ENCODE measurements at regions of chr16 and their contacts with region 1.

Region 1: DNA sequence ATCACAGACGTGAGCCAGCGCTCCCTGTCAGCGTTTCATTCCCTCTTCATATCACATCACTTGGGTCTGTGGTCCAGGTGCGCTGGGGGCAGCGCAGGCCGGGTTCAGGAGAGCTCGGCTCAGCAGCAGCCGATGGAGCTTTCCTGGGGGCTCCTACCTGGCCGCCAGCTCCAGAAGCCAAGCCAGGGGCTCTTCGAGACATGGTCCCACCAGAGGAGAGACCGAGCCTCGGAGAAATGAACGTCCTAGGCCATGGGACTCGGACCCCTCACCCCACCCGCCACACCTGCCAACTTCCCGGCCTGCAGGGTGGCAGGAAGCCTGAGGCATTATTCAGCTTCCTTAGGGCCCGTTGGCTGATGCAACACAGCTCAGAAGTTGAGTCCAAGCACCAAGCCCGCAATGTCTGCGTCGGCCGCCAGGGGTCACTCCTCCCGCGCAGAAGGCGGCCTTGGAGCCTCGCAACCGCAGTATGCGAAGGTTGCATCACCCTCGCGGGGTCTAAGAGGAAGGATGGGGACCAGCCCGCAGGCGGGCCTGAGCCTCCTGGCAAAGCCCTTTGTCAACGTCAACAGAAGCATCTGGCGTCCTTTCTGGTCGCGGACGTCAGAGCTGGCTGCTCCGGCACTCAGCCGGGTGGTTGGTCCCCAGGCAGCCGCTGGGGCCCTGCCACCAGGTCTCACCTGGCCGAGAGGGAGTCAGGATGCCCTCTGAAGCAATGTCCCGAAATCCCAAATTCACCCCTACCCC is 13.2 kb upstream of the KLHDC4 start:
- DNase-seq: peak; percentile 97
- ATAC-seq: peak; percentile 80
- H3K4me3 Mint-ChIP-seq: peak overlapping the region; percentile 66
- H3K27ac Mint-ChIP-seq: peak overlapping the region; percentile 97
- H3K4me1 Mint-ChIP-seq: peaks cover 65% of the 10 kb centered on the region
- H3K27me3 Mint-ChIP-seq: no peaks in the 10 kb centered on the region

Region 2: GRCh38 chr16:87636072-87636684 is 142.8 kb before region 1 on chr16:
- CTCF ChIA-PET with region 1: no interaction called
- POLR2A ChIA-PET with region 1: no interaction called
- DNase-seq: peak; percentile 85
- ATAC-seq: peak; percentile 93
- H3K4me3 Mint-ChIP-seq: peak overlapping the region; percentile 59
- H3K27ac Mint-ChIP-seq: no peak overlapping the region
- H3K4me1 Mint-ChIP-seq: peaks cover 18% of the 10 kb centered on the region
- H3K27me3 Mint-ChIP-seq: peaks cover 6% of the 10 kb centered on the region

Region 3: DNA sequence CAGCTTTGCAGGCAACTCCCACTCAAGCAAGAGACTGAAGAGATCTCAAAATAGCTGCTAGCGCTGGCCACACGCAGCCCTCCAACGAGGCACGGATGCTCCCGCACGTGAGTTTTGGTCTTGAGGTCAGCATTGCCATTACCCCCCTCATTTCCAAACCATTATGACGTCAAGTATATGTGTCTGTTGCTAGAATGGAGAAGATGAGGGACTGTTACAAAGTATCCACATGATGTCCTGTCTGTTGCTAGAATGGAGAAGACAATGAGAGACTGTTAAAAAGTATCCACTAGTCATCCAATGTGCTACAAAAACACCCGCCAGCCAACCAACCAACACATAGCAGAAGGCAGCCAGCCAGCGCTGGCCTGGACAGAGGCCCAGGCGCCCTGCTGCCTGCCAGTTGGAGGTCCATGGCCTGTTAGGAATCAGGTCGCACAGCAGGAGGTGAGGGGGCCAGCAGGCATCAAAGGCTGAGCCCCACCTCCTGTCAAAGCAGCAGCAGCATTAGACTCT is 38.0 kb before region 1 on chr16:
- CTCF ChIA-PET with region 1: no interaction called
- POLR2A ChIA-PET with region 1: no interaction called
- DNase-seq: no peak
- ATAC-seq: no peak
- H3K4me3 Mint-ChIP-seq: no peak overlapping the region
- H3K27ac Mint-ChIP-seq: no peak overlapping the region
- H3K4me1 Mint-ChIP-seq: no peaks in the 10 kb centered on the region
- H3K27me3 Mint-ChIP-seq: no peaks in the 10 kb centered on the region

Region 4: GRCh38 chr16:87790278-87791032 is 11.4 kb after region 1 on chr16:
- CTCF ChIA-PET with region 1: interaction called, 13 read pairs
- POLR2A ChIA-PET with region 1: interaction called, 3 read pairs
- DNase-seq: no peak
- ATAC-seq: no peak
- H3K4me3 Mint-ChIP-seq: no peak overlapping the region
- H3K27ac Mint-ChIP-seq: no peak overlapping the region
- H3K4me1 Mint-ChIP-seq: peaks cover 3% of the 10 kb centered on the region
- H3K27me3 Mint-ChIP-seq: no peaks in the 10 kb centered on the region

Region 5: GRCh38 chr16:87812200-87812656 is 33.2 kb after region 1 on chr16:
- CTCF ChIA-PET with region 1: interaction called, 47 read pairs
- POLR2A ChIA-PET with region 1: interaction called, 20 read pairs
- DNase-seq: no peak
- ATAC-seq: no peak
- H3K4me3 Mint-ChIP-seq: no peak overlapping the region
- H3K27ac Mint-ChIP-seq: no peak overlapping the region
- H3K4me1 Mint-ChIP-seq: peaks cover 30% of the 10 kb centered on the region
- H3K27me3 Mint-ChIP-seq: peaks cover 5% of the 10 kb centered on the region

Region 6: DNA sequence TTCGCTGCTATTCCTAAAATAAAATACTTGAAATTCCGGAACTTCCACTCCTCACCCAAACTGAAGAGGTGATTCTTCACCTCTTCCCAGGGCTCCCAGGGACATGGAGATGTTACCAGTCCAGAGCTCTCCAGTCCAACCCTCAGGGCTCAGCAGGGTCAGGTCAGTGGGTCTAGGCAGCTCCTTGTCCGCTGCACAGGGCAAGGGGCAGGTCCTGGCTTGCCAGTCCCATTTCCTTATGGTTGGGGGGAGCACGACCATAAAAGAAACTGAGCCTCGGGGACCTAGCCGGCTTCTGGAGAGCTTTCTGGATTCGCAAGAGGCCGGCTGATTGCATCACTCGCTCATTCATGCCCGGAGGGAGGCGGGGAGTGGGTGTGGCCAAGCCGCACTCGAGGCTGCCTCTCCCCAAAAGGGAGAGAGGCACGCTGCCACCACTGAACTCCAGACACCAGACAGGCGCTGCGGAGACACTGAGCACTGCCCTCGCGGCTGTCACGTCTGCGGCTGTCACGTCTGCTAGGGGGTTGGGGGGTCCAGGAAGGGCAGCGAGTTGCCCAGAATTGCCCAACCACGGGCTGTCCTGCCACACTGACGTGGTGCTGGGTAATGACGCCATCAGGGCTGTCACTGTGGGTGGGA is 74.5 kb after region 1 on chr16:
- CTCF ChIA-PET with region 1: interaction called, 150 read pairs
- POLR2A ChIA-PET with region 1: interaction called, 10 read pairs
- DNase-seq: peak; percentile 94
- ATAC-seq: peak; percentile 75
- H3K4me3 Mint-ChIP-seq: peak overlapping the region; percentile 68
- H3K27ac Mint-ChIP-seq: peak overlapping the region; percentile 96
- H3K4me1 Mint-ChIP-seq: peaks cover 79% of the 10 kb centered on the region
- H3K27me3 Mint-ChIP-seq: no peaks in the 10 kb centered on the region

Region 7: GRCh38 chr16:87877938-87878507 is 99.0 kb after region 1 on chr16:
- CTCF ChIA-PET with region 1: interaction called, 493 read pairs
- POLR2A ChIA-PET with region 1: interaction called, 9 read pairs
- DNase-seq: peak; percentile 62
- ATAC-seq: no peak
- H3K4me3 Mint-ChIP-seq: no peak overlapping the region
- H3K27ac Mint-ChIP-seq: peak overlapping the region; percentile 34
- H3K4me1 Mint-ChIP-seq: peaks cover 34% of the 10 kb centered on the region
- H3K27me3 Mint-ChIP-seq: peaks cover 14% of the 10 kb centered on the region

Region 8: GRCh38 chr16:87914812-87915211 is 135.8 kb after region 1 on chr16:
- CTCF ChIA-PET with region 1: interaction called, 25 read pairs
- POLR2A ChIA-PET with region 1: interaction called, 3 read pairs
- DNase-seq: no peak
- ATAC-seq: no peak
- H3K4me3 Mint-ChIP-seq: no peak overlapping the region
- H3K27ac Mint-ChIP-seq: no peak overlapping the region
- H3K4me1 Mint-ChIP-seq: peaks cover 6% of the 10 kb centered on the region
- H3K27me3 Mint-ChIP-seq: peaks cover 6% of the 10 kb centered on the region

Measured in activated CD8-positive, alpha-beta T cell treated with anti-CD3 and anti-CD28 coated beads, Interleukin-2, amount 10 ng/mL, durations not matched to agents 7 days and 5 days (primary cell).